Activated T-helper 2 cell treated with anti-CD3 and anti-CD28 coated beads, Interferon-gamma antibody, Interleukin-2, Interleukin-4, amounts not matched to agents 10 μg/mL and 5 μg/mL and 100 μg/mL, durations not matched to agents 14 hours and 24 hours and 36 hours (primary cell): ENCODE measurements at regions of chr14 and their contacts with region 1.

Region 1: DNA sequence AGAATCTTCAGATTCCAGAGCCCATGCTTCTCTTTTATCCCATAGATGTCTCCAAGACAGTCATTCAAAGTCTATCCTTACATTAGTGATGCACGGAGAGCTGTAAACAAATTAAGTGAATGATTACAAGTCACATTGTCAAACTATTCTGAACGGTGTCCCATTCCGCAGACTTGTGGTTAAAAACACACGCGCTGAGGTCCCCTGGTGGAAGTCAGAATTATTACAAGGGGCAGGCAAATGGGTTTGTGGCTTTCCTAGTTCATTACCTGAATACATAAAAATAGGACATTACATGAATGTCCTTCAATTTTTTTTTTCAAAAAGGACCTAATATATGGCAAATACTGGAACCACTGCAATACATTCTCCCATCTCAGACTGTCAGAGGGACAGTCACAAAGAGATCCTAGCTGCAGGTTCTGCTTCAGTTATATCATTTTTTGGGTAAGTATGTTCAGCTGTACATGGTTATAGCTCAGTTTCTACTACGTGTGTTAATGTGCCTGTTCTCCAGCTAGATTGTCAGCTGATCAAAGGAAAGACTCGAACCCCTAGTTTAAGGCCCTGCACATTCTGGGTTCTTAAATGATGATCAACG is 53.1 kb upstream of the STON2 start:
- DNase-seq: peak; percentile 23
- H3K4me3 Mint-ChIP-seq: no peak overlapping the region
- H3K27ac Mint-ChIP-seq: no peak overlapping the region
- H3K4me1 Mint-ChIP-seq: peaks cover 3% of the 10 kb centered on the region
- H3K27me3 Mint-ChIP-seq: peaks cover 5% of the 10 kb centered on the region

Region 2: DNA sequence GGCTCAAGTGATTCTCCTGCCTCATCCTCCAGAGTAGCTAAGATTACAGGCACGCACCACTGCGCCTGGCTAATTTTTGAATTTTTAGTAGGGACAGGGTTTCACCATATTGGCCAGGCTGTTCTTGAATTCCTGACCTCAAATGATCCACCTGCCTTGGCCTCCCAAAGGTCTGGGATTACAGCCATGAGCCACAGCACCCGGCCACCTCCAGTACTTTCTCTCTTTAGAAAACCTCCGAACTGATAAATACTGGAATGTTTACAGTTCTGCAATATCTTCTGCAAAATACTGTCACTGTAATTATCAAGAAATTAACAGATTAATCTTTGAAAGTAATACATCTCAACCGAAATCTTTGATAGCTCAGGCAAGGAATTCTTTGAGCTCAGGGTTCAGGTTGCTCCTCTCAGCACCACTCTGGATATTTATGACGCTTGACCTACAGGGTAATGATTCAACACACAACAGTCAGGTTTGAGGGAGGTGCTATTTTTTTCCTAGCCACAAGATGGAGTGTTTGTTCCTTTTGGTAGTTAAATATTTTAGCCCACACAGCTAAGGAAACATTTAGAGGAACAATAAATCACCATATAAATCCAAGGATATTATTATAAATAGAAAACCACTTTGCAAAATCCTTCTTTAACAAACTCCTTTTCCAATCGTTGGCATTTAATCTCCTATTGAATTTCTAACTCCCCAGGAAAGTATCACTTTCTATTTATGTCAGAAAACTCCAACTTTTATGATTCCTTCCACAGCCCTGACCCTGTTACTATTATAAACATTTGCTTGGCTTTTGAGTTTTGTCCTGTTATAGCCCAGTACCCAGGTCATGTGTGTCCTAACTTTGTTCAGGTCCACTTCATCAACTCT is 183.9 kb before region 1 on chr14:
- intact Hi-C with region 1: loop called (anchors 1 kb)
- DNase-seq: no peak
- H3K4me3 Mint-ChIP-seq: no peak overlapping the region
- H3K27ac Mint-ChIP-seq: no peak overlapping the region
- H3K4me1 Mint-ChIP-seq: peaks cover 13% of the 10 kb centered on the region
- H3K27me3 Mint-ChIP-seq: peaks cover 19% of the 10 kb centered on the region